ENCODE measurements at regions of chr14 and their contacts with region 1.

Region 1: GRCh38 chr14:65243766-65244442 is 141.6 kb upstream of the MAX start:
- DNase-seq: no peak

Region 2: DNA sequence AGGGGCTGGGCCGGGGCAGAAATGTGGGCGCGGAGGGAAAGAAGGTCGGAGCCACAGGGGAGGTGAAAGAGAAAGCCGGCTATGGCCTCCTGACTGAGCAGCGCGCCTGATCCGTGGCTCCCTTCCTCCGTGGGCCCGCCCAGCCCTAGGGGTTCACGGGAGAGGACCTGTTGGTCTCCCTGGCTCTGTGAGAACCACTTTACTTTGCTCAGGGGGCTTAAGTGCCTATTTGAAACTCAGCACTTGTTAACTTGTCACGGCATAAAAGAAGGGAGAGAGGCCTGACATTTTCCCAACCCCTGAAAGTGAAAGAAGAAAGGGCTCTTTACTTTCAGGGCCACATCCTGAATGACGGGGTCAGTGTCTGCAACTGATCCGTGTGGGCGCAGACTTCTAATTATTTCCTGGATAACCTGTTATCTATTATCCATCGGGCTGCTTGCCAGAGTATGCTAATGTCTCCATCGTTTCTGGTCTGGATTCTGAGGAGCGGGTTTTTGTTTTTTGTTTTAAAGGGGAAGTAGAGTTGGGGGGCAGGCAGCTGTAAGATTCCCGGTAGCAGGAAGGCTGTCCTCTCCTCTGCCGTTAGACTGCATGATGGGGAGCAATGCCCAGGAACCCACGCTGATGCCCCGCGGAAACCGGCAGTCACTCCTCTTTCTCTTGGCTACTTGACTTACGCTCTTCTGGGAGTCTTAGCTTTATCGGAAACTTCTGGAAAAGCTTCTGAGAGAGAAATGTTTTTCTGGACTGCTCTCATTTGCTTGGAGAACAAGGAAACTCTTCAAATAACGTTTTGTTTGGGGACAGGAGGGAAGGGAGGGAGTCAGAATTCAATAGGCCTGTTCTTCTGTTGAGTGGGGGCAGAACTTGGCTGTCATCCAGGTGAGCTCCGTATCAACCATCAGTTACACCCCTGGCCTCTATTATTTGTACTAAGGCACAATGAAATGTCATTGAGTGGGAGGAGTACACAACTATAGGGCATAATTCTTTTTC is 13.9 kb before region 1 on chr14:
- intact Hi-C with region 1: loop called in 1 of 2 experiments (anchors 2 kb)
- DNase-seq: no peak

Region 3: DNA sequence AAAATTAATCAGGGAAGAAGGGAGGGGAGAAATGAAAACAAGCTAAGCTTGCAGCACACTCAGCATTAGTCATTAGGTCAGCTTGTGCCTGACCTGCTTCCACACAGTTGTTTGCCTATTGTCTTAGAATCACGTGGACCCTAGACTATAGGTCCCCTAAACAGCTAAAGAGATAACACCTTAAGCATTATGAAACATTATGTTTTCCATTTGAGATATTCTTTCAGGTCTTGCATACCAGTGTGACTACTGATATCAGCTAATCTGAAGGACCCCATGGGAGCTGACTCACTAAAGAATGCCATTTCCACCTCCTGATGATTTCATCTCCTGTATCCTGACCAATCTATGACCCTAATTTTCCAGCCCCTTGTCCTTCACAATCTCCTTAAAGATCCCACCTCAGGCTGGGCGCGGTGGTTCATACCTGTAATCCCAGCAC is 14.5 kb after region 1 on chr14:
- intact Hi-C with region 1: loop called in 1 of 2 experiments (anchors 1 kb)
- DNase-seq: no peak

Measured in posterior vena cava (tissue), 2 donors.